Ovary (tissue), 10 donors: ENCODE measurements at regions of chr1 and their contacts with region 1.

Region 1: GRCh38 chr1:215923128-215923824 is 356.2 kb downstream of the KCTD3 start:
- DNase-seq: no peak
- H3K4me3 ChIP-seq: no peak overlapping the region
- H3K27ac ChIP-seq: no peak overlapping the region
- H3K4me1 ChIP-seq: no peaks in the 10 kb centered on the region
- H3K27me3 ChIP-seq: no peaks in the 10 kb centered on the region
- CTCF ChIP-seq: no peak
- EP300 ChIP-seq: no peak
- POLR2A ChIP-seq: no peak

Region 2: GRCh38 chr1:213969958-213970555 is 1953.2 kb before region 1 on chr1:
- intact Hi-C with region 1: loop called in 1 of 4 experiments (anchors 10 kb)
- DNase-seq: no peak
- H3K4me3 ChIP-seq: no peak overlapping the region
- H3K27ac ChIP-seq: no peak overlapping the region
- H3K4me1 ChIP-seq: no peaks in the 10 kb centered on the region
- H3K27me3 ChIP-seq: no peaks in the 10 kb centered on the region
- CTCF ChIP-seq: no peak
- EP300 ChIP-seq: no peak
- POLR2A ChIP-seq: no peak

Region 3: DNA sequence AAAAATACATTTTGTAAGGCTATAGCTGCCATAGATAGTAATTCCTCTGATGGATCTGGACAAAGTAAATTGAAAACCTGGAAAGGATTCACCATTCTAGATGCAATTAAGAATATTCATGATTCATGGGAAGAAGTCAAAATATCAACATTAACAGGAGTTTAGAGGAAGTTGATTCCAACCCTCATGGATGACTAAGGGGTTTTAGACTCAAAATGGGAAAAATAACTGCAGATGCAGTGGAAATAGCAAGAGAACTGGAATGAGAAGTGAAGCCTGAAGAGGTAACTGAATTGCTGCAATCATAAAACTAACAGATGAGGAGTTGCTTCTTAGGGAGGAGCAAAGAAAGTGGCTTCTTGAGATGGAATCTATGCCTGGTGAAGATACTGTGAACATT is 125.4 kb before region 1 on chr1:
- intact Hi-C with region 1: no loop called
- DNase-seq: no peak
- H3K4me3 ChIP-seq: no peak overlapping the region
- H3K27ac ChIP-seq: no peak overlapping the region
- H3K4me1 ChIP-seq: no peaks in the 10 kb centered on the region
- H3K27me3 ChIP-seq: no peaks in the 10 kb centered on the region
- CTCF ChIP-seq: no peak
- EP300 ChIP-seq: no peak
- POLR2A ChIP-seq: no peak